ENCODE measurements at regions of chr18 and their contacts with region 1.

Region 1: GRCh38 chr18:60826346-60826745 is 453.8 kb upstream of the MC4R start:
- DNase-seq: no peak
- ATAC-seq: no peak

Region 2: DNA sequence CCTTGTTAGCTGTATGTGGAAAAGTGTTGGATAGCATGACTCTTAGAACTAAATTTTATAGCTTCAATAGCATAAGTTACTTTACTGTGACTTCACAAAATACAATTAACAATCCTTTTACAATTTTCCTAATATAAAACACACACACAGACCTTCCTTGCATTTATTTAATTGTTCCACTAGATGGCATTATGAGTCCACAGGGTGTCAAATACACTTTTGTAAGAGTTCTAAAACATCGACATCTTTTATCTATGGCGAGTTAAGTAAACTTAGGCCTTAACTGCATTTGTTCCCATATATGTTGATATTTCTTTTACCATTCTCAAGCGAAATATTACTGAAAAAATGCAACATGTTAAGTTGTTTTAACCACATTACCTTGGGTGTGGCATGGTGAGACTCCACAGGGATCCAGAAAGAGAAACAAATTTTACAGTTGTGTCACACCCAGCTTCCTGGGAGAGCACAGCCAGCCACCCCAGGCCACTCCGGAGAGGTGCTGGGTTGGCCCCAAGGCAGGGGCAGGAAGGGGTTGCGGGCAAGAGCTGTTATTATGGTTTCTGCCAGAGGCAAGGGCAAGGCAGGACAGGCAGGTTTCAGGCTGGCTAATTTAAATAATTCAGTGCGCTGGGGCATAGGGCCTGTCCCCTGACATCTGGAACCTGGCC is 141.4 kb before region 1 on chr18:
- intact Hi-C with region 1: loop called (anchors 10 kb)
- DNase-seq: no peak
- ATAC-seq: no peak

Region 3: DNA sequence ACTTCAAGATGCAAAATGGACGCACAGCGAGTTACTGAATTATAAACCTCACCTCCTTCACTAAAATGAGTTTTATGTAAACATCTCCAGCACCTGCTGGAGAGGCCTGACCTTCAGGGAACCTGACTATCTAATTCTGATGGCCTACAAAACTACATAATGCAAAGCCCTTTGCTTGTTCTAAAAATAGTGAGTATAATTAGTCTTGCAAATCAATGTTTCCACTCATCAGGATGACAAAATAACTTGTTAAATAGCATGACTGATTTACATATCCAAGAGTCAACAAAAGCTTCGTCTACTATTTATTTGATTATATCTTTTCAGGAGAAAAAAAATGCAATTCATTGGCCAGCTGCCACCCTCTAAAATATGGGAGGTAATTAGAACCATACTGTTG is 127.4 kb before region 1 on chr18:
- intact Hi-C with region 1: no loop called
- DNase-seq: no peak
- ATAC-seq: no peak

Region 4: DNA sequence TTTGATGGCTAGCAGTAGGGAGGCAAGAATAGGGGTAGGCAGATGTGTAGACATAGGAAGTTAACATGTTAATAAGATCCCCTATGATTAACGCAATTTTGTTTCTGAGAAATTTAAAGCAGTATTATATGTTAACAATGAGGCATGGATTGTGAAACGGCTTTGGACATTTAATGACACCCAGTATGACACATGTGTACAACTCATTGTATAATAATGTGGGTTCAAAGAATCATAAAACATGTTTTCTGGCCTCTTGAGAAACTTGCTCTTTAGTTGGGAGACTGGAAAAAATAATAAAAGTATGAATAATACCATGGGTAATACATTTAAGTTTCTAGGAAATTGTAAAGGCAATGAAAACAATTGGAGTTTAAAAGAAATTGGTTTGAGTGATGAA is 174.8 kb after region 1 on chr18:
- intact Hi-C with region 1: no loop called
- DNase-seq: no peak
- ATAC-seq: no peak

Measured in Right ventricle myocardium inferior (tissue), 1 donor.